ENCODE measurements at regions of chr14 and their contacts with region 1.

Region 1: GRCh38 chr14:64540208-64541157 is at the start of gene HSPA2:
- DNase-seq: peak; percentile 99
- ATAC-seq: peak; percentile 95
- H3K4me3 ChIP-seq: peak within 1 kb of the TSS; percentile 67
- H3K27ac ChIP-seq: peak within 1 kb of the TSS; percentile 40
- H3K4me1 ChIP-seq: no peaks in the 10 kb centered on the region; the same call in 1 of the 2 replicates
- H3K27me3 ChIP-seq: no peaks in the 10 kb centered on the region
- CTCF ChIP-seq: peak; percentile 97
- POLR2A ChIP-seq: peak; percentile 98
- RAD21 ChIP-seq: peak; percentile 78
- total RNA-seq, gene HSPA2: 18.9 and 19.7 TPM in 2 replicates

Region 2: DNA sequence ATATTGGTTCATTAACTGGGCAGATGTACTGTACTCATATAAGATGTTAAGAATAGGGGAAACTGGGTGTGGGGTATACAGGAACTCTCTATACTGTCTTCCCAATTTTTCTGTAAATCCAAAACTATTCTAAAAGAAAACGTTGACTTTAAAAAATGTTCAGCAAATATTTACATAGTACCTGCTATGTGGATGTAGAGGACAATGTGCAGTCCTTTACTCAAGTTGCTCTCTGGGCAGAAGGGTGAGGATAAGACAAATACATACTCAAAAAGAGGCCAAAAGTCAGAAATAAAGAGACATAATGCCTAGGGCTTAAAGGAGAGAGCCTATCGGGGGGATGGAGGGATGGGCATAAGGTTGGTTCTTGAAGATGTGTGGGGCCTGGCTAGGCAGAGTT is 53.9 kb after region 1 on chr14:
- CTCF ChIA-PET with region 1: interaction called, 3 read pairs
- POLR2A ChIA-PET with region 1: interaction called, 14 read pairs
- dilution Hi-C with region 1: no loop called
- in situ Hi-C with region 1: no loop called
- intact Hi-C with region 1: no loop called
- DNase-seq: no peak
- ATAC-seq: no peak
- H3K4me3 ChIP-seq: no peak overlapping the region
- H3K27ac ChIP-seq: no peak overlapping the region
- H3K4me1 ChIP-seq: no peaks in the 10 kb centered on the region
- H3K27me3 ChIP-seq: no peaks in the 10 kb centered on the region
- CTCF ChIP-seq: no peak
- POLR2A ChIP-seq: no peak
- RAD21 ChIP-seq: no peak

Region 3: GRCh38 chr14:64628940-64629408 is 88.5 kb after region 1 on chr14:
- CTCF ChIA-PET with region 1: interaction called, 8 read pairs
- POLR2A ChIA-PET with region 1: interaction called, 4 read pairs
- dilution Hi-C with region 1: no loop called
- in situ Hi-C with region 1: loop called (anchors 5 kb)
- intact Hi-C with region 1: loop called (anchors 2 kb)
- DNase-seq: peak; percentile 98
- ATAC-seq: peak; percentile 98
- H3K4me3 ChIP-seq: no peak overlapping the region
- H3K27ac ChIP-seq: peak overlapping the region; percentile 71
- H3K4me1 ChIP-seq: peaks cover 20% of the 10 kb centered on the region
- H3K27me3 ChIP-seq: no peaks in the 10 kb centered on the region
- CTCF ChIP-seq: peak; percentile 13; the same call in 1 of the 2 replicates
- POLR2A ChIP-seq: peak; percentile 64
- RAD21 ChIP-seq: peak; percentile 34

Region 4: GRCh38 chr14:64645220-64645892 is 104.9 kb after region 1 on chr14:
- CTCF ChIA-PET with region 1: interaction called, 8 read pairs
- POLR2A ChIA-PET with region 1: no interaction called
- dilution Hi-C with region 1: no loop called
- in situ Hi-C with region 1: no loop called
- intact Hi-C with region 1: loop called (anchors 2 kb)
- DNase-seq: peak; percentile 97
- ATAC-seq: peak; percentile 91
- H3K4me3 ChIP-seq: no peak overlapping the region
- H3K27ac ChIP-seq: peak overlapping the region; percentile 96
- H3K4me1 ChIP-seq: peaks cover 15% of the 10 kb centered on the region
- H3K27me3 ChIP-seq: no peaks in the 10 kb centered on the region
- CTCF ChIP-seq: no peak
- POLR2A ChIP-seq: no peak
- RAD21 ChIP-seq: no peak

Region 5: DNA sequence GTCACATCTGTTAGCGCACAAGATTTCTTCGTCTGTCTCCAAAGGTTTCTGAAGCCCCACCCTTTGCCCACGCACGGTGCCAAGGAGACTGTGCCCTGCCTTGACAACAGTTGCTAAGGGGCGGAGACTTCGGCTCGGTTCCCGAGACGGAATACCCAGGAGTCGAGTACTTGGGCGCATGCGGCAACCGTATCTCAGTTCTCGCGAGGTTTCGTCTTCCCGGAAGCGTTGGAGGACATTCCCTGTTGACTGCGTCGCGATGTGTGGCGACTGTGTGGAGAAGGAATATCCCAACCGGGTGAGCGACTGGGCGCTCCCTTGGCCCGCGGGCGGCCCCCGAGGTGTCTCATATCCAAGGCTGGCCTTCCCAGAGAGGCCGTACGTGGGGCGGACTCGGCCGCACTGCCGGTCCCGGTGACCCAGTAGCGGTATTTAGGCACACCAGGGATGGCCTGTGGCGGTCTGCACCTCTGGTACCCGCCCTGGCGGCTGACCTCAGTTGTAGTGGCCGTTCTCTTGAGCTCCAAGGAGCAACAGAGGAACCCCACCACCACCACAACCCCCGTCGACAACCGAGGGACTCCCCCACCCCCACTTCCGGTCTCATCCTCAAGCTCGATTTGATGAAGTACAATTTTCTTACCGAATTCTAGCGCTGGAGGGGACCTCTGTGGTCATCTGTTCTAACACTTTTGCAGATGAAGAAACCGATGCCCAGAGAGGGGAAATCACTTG is 373.9 kb after region 1 on chr14 and contains the start of gene CHURC1:
- CTCF ChIA-PET with region 1: no interaction called
- POLR2A ChIA-PET with region 1: no interaction called
- dilution Hi-C with region 1: no loop called
- in situ Hi-C with region 1: loop called (anchors 25 kb)
- intact Hi-C with region 1: no loop called
- DNase-seq: peak; percentile 96
- ATAC-seq: peak; percentile 97
- H3K4me3 ChIP-seq: peak within 1 kb of the TSS; percentile 74
- H3K27ac ChIP-seq: peak within 1 kb of the TSS; percentile 75
- H3K4me1 ChIP-seq: peaks cover 4% of the 10 kb centered on the region
- H3K27me3 ChIP-seq: no peaks in the 10 kb centered on the region; the same call in 1 of the 2 replicates
- CTCF ChIP-seq: no peak
- POLR2A ChIP-seq: peak; percentile 96
- RAD21 ChIP-seq: no peak
- total RNA-seq, gene CHURC1: 38.0 and 51.9 TPM in 2 replicates

Region 6: GRCh38 chr14:66359500-66359899 is 1819.0 kb after region 1 on chr14:
- CTCF ChIA-PET with region 1: no interaction called
- POLR2A ChIA-PET with region 1: no interaction called
- dilution Hi-C with region 1: no loop called
- in situ Hi-C with region 1: no loop called
- intact Hi-C with region 1: no loop called
- DNase-seq: peak; percentile 64
- ATAC-seq: peak; percentile 40; the same call in 1 of the 2 replicates
- H3K4me3 ChIP-seq: no peak overlapping the region
- H3K27ac ChIP-seq: no peak overlapping the region
- H3K4me1 ChIP-seq: no peaks in the 10 kb centered on the region
- H3K27me3 ChIP-seq: no peaks in the 10 kb centered on the region
- CTCF ChIP-seq: peak; percentile 67
- POLR2A ChIP-seq: no peak
- RAD21 ChIP-seq: peak; percentile 62